Activated T-helper 2 cell treated with anti-CD3 and anti-CD28 coated beads, Interferon-gamma antibody, Interleukin-2, Interleukin-4, amounts not matched to agents 10 μg/mL and 5 μg/mL and 100 μg/mL, durations not matched to agents 14 hours and 24 hours and 36 hours (primary cell): ENCODE measurements at regions of chr13 and their contacts with region 1.

Region 1: GRCh38 chr13:52011632-52012511 is at the start of gene ALG11:
- DNase-seq: peak; percentile 99
- H3K4me3 Mint-ChIP-seq: peak within 1 kb of the TSS; percentile 94
- H3K27ac Mint-ChIP-seq: peak within 1 kb of the TSS; percentile 86
- H3K4me1 Mint-ChIP-seq: peaks cover 9% of the 10 kb centered on the region
- H3K27me3 Mint-ChIP-seq: peaks cover 35% of the 10 kb centered on the region
- total RNA-seq, gene ALG11: 21.5 and 21.9 TPM in 2 replicates

Region 2: GRCh38 chr13:52617070-52618060 is 605.5 kb after region 1 on chr13:
- intact Hi-C with region 1: loop called (anchors 1 kb)
- DNase-seq: peak; percentile 80
- H3K4me3 Mint-ChIP-seq: peak overlapping the region; percentile 99
- H3K27ac Mint-ChIP-seq: peak overlapping the region; percentile 89
- H3K4me1 Mint-ChIP-seq: peaks cover 16% of the 10 kb centered on the region
- H3K27me3 Mint-ChIP-seq: peaks cover 6% of the 10 kb centered on the region